Panc1 (cell line): ENCODE measurements at regions of chr19 and their contacts with region 1.

Region 1: GRCh38 chr19:37906869-37907734 is at the start of gene SIPA1L3:
- DNase-seq: peak; percentile 80
- ATAC-seq: peak; percentile 98
- H3K4me3 ChIP-seq: peak within 1 kb of the TSS; percentile 76 to 97
- H3K27ac ChIP-seq: peak within 1 kb of the TSS; percentile 75
- H3K4me1 ChIP-seq: peaks cover 10% of the 10 kb centered on the region
- H3K27me3 ChIP-seq: no peaks in the 10 kb centered on the region
- CTCF ChIP-seq: no peak
- total RNA-seq, gene SIPA1L3: 66.3 TPM

Region 2: DNA sequence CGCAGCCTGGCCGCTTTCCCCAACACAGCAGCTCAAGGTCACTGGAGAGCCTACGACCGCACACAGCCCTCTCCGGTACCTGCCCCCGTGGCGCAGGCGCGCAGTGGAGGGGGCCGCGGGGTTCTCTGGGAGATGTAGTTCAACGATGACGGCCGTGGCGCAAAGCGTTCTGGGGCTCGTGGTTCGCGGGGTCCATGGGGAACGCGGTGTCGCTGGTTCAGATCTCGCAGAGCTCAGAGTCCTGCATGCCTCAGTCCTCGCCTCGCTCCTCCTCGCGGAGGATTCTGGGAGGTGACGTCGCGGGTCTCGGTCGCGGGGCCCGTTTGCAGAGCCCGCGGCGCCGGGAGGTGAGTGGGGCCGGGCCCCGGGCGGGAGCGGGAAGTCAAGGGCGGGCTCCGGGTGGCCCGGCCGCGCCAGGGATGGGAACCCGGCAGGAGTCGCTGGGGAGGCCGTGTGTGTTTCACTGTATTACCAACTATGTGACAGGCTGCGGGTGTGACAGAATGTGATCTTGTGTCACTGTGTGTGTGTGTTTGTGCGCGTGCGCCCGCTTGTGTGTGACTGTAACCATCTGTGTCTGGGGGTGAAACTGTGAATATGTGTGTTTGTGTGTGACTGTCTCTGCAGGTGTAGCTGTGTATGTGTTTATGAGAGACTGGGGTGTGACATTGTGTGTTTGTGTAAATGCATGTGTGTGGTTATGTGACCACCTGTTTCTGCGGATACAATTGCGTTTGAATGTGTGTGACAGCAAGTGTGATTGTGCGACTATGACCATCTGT is 536.0 kb before region 1 on chr19 and contains the start of gene ZNF527:
- CTCF ChIA-PET with region 1: no interaction called
- POLR2A ChIA-PET with region 1: interaction called, 12 read pairs
- in situ Hi-C with region 1: no loop called
- intact Hi-C with region 1: no loop called
- DNase-seq: peak; percentile 93
- ATAC-seq: peak; percentile 100
- H3K4me3 ChIP-seq: peak within 1 kb of the TSS; percentile 67 to 95
- H3K27ac ChIP-seq: peak within 1 kb of the TSS; percentile 93
- H3K4me1 ChIP-seq: peaks cover 4% of the 10 kb centered on the region; the same call in 1 of the 2 replicates
- H3K27me3 ChIP-seq: no peaks in the 10 kb centered on the region
- CTCF ChIP-seq: no peak
- total RNA-seq, gene ZNF527: 8.9 TPM

Region 3: DNA sequence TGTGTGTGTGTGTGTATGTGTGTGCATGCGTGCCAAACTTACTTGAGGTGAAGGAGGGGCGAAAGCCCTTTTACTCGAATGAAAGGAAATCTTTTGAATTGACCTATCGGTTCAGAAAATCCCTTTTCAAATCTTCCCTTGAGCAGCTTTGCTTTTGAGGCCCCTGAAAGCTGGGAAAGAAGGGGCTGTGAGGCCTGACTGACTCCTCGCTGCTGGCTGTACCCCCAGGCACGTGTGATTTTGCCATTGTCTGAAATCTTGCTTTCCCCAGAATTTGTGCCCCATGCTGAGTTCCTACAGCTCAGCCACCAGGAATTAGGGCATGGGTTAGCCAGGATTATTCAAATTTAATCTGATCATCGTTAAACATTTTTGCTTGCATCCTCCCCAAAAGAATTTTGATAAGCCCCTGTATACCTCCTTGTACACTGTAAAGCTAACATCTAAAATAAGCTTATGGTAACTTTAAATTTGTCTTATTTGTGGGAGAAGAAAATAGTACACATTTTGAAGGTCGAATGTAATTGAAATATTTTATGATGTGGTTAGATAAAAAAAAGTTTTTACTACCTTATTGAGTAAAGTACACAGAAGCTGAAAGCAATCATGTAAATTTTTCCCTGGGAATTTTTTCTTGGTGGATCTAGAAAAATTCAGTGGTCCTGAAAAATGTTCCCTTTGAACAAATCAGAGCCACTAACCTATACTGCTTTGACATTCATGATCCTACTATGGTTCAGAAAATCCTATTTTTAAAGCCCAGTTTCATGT is 46.6 kb after region 1 on chr19:
- CTCF ChIA-PET with region 1: no interaction called
- POLR2A ChIA-PET with region 1: no interaction called
- in situ Hi-C with region 1: no loop called
- intact Hi-C with region 1: no loop called
- DNase-seq: no peak
- ATAC-seq: no peak
- H3K4me3 ChIP-seq: no peak overlapping the region
- H3K27ac ChIP-seq: peak overlapping the region; percentile 35
- H3K4me1 ChIP-seq: peaks cover 16% of the 10 kb centered on the region
- H3K27me3 ChIP-seq: no peaks in the 10 kb centered on the region
- CTCF ChIP-seq: no peak

Region 4: GRCh38 chr19:37979547-37980082 is 72.5 kb after region 1 on chr19:
- CTCF ChIA-PET with region 1: no interaction called
- POLR2A ChIA-PET with region 1: no interaction called
- in situ Hi-C with region 1: no loop called
- intact Hi-C with region 1: loop called (anchors 10 kb)
- DNase-seq: no peak
- ATAC-seq: no peak
- H3K4me3 ChIP-seq: no peak overlapping the region
- H3K27ac ChIP-seq: no peak overlapping the region
- H3K4me1 ChIP-seq: peaks cover 3% of the 10 kb centered on the region; the same call in 1 of the 2 replicates
- H3K27me3 ChIP-seq: no peaks in the 10 kb centered on the region
- CTCF ChIP-seq: no peak

Region 5: GRCh38 chr19:38095411-38096308 is 188.6 kb after region 1 on chr19:
- CTCF ChIA-PET with region 1: no interaction called
- POLR2A ChIA-PET with region 1: no interaction called
- in situ Hi-C with region 1: no loop called
- intact Hi-C with region 1: loop called (anchors 10 kb)
- DNase-seq: peak; percentile 50
- ATAC-seq: peak; percentile 90
- H3K4me3 ChIP-seq: no peak overlapping the region
- H3K27ac ChIP-seq: no peak overlapping the region
- H3K4me1 ChIP-seq: no peaks in the 10 kb centered on the region
- H3K27me3 ChIP-seq: no peaks in the 10 kb centered on the region
- CTCF ChIP-seq: peak; percentile 95

Region 6: GRCh38 chr19:38224014-38224862 is 317.1 kb after region 1 on chr19 and contains the start of gene DPF1:
- CTCF ChIA-PET with region 1: interaction called, 4 read pairs
- POLR2A ChIA-PET with region 1: no interaction called
- in situ Hi-C with region 1: no loop called
- intact Hi-C with region 1: loop called (anchors 10 kb)
- DNase-seq: no peak
- ATAC-seq: peak; percentile 92
- H3K4me3 ChIP-seq: peak within 1 kb of the TSS; percentile 53 to 81
- H3K27ac ChIP-seq: no peak within 1 kb of the TSS
- H3K4me1 ChIP-seq: peaks cover 13% of the 10 kb centered on the region
- H3K27me3 ChIP-seq: no peaks in the 10 kb centered on the region
- CTCF ChIP-seq: no peak
- total RNA-seq, gene DPF1: 7.5 TPM

Region 7: DNA sequence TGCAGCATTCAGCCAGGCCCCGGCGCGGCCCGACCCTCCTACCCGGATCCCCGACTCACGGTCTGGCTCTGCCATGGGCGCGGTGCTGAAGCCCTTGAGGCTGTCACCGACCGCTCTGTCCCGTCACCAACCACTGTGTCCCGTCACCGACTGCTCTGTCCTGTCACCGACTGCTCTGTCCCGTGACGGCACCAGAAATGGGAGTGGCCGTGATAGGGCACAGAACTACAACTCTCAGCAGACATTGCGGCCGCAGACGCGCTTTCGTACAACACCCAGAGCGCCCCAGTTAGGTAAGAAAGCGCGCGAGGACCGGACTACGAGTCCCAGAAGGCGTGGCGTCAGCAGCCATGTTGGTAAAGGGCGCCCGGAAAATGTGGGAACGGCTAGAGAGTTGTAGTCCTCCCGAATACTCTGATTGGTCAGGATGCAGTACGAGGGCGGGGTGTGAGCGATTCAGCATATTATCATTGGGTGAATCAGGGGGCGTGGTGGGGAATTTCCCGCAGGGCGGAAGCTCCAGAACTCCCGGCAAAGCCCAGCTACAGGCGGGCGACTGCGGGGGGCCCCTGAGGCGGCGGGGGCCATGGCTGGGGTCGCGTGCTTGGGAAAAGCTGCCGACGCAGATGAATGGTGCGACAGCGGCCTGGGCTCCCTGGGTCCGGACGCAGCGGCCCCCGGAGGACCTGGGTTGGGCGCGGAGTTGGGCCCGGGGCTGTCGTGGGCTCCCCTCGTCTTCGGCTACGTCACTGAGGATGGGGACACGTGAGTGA is 992.5 kb after region 1 on chr19 and contains the starts of genes NFKBIB and SIRT2:
- CTCF ChIA-PET with region 1: no interaction called
- POLR2A ChIA-PET with region 1: no interaction called
- in situ Hi-C with region 1: no loop called
- intact Hi-C with region 1: no loop called
- DNase-seq: peak; percentile 100
- ATAC-seq: peak; percentile 97
- H3K4me3 ChIP-seq: peak within 1 kb of the TSS; percentile 55 to 75
- H3K27ac ChIP-seq: peak within 1 kb of the TSS; percentile 89
- H3K4me1 ChIP-seq: peaks cover 21% of the 10 kb centered on the region
- H3K27me3 ChIP-seq: no peaks in the 10 kb centered on the region
- CTCF ChIP-seq: no peak
- total RNA-seq, gene NFKBIB: 185 TPM
- total RNA-seq, gene SIRT2: 162 TPM